Naive thymus-derived CD8-positive, alpha-beta T cell (primary cell): ENCODE measurements at regions of chr4 and their contacts with region 1.

Region 1: DNA sequence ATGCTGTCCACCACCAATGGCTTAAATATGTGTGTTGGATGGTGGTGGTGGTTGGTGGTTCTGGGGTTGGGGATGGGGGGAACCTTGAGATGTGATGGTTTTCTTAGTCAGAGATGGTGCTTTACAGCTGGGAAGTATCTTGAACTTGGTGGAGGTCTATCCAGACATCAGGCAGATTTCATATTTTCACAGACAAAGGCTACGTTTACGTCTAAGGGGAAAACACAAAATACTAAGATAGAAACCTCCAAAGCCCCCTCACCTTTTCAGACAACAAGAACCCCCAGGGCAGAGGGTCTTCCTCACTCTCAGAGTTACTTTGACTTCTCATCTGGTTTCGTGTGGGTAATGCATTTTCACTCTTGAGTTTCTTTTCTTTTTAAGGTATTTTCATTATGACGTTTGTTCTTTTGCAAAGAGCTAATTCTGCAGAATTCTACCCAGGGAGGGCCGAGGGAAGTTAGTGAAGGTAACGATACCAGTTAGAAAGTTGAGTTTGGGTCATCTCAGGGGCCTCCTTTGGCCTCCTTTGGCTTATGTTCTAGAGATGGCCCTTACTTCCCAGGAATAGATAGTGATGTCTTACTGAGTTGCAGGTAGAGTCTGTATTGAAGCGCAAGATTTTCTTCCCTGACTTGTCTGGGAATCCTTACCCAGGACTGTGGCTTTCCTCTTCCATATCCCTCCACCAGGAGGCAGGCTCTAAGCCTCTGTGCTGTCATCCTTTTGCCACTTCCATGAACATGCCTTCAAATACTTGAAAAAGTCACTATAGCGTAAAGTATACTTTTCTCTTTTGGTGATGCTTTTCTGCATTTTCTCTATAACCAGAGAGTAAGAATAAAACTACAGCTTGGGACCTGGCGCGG is 31.9 kb downstream of the RHOH start:
- DNase-seq: no peak
- ATAC-seq: no peak
- H3K4me3 Mint-ChIP-seq: peak overlapping the region; percentile 62 to 91 (median 82)
- H3K27ac Mint-ChIP-seq: peak overlapping the region; percentile 88 to 99 (median 97)
- H3K4me1 Mint-ChIP-seq: peaks cover 47 to 96% (median 90%) of the 10 kb centered on the region in 4 donors
- H3K27me3 Mint-ChIP-seq: no peaks in the 10 kb centered on the region

Region 2: DNA sequence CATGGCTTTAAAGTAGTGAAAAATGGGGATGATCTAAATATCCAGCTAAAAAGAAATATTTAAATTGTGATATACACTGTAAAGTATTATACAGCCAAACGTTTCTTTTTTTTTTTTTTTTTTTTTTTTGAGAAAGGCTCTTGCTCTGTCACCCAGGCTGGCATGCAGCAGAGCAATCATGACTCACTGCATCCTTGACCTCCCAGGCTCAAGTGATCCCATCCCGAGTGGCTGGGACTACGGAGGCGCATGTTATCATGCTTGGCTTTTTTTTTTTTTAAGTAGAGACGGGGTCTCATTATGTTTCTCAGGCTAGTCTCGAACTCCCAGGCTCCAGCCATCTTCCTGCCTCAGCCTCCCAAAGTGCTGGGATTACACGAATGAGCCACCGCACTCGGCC is 607.1 kb before region 1 on chr4:
- POLR2A ChIA-PET with region 1: no interaction called
- DNase-seq: no peak
- ATAC-seq: no peak
- H3K4me3 Mint-ChIP-seq: no peak overlapping the region
- H3K27ac Mint-ChIP-seq: no peak overlapping the region
- H3K4me1 Mint-ChIP-seq: peaks cover 0 to 35% (median 4%) of the 10 kb centered on the region in 4 donors
- H3K27me3 Mint-ChIP-seq: no peaks in the 10 kb centered on the region

Region 3: DNA sequence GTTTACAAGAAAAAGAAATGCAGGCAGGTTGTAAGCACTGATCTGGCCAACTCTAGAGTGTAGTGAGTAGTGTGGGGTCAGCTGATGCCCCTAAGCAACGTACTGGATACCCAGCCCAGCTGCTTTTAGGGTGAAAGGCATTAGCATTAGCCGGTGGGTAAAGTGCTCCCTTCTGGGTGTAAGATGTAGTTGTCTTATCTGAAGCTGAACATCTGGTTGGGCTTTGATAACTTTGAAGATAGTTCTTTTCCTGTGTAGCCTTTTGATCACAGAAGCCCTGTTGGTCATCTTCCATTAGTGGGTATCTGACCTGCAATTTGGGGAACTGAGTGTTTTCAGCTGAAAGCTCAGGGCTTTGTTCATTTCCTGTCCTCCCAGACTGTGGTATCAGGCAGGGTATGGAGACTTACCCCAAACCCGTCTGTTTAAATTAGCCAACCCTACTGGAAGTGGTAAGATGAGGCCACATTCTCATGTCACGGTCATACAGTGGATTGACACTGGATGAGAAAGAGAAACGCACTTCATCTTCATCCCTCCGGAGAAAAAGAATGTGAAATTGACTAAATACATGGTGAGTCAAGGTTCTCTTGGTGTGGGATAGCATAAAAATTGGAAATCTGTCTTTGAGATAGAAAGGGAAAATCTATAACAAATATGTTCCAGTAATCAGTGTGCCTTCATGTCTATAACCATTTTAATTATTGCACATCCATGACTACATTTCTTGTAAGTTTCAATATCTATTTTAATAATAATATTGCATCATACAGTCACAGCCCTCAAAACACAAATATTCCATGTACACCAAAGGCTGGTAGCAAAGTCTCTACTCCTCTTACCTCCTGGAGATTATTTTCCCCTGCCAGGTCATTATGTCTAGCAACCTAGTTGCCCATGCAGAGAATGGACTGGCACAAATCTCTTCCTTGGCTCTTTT is 23.2 kb before region 1 on chr4:
- POLR2A ChIA-PET with region 1: interaction called, 376 read pairs
- DNase-seq: no peak
- ATAC-seq: peak; percentile 29 to 42
- H3K4me3 Mint-ChIP-seq: peak overlapping the region; percentile 94 to 100 (median 98)
- H3K27ac Mint-ChIP-seq: peak overlapping the region; percentile 88 to 100 (median 95)
- H3K4me1 Mint-ChIP-seq: peaks cover 32 to 91% (median 69%) of the 10 kb centered on the region in 4 donors
- H3K27me3 Mint-ChIP-seq: no peaks in the 10 kb centered on the region

Region 4: DNA sequence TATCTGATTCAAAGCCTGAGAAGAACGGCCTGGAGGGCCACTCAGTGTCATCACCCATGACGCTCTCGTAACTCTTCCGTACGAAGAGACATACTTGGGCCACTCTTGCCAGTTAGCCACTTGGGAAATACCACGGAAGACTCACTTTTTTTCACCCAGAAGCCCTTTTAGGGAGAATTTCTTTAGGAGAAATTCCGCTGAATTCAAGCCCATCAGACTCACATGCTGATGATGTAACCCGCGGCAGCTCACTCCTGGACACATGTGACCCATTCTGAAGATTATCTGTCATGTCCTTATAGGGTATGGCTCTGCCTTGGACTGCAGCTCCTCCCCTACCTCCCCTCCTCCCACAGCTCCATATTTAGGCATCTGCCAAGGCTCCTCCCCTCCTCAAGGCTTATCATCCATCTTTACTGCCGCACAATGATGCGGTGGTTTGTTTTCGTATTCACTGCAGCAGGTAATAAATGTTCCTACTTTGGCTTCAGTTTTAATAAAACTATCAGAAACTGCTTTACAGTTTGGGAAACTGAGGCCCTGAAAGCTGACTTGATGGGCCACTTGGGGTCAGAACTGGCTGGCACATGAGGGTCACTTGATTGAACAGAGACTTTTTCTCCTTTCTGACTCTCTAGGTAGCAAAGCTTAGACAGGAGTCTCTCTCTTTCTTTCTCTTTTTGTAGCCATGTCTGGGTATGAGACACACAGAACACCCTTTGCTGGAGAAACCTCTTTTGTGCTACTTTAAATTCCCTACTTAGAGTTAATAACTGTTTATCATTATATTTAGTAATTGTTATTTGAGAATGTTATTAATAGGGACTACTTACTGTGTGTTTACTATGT is 10.2 kb after region 1 on chr4:
- POLR2A ChIA-PET with region 1: interaction called, 45 read pairs
- DNase-seq: peak; percentile 32 to 91 (median 78)
- ATAC-seq: peak; percentile 76 to 92
- H3K4me3 Mint-ChIP-seq: peak overlapping the region; percentile 70 to 89 (median 78)
- H3K27ac Mint-ChIP-seq: peak overlapping the region; percentile 92 to 99 (median 97)
- H3K4me1 Mint-ChIP-seq: peaks cover 43 to 93% (median 91%) of the 10 kb centered on the region in 4 donors
- H3K27me3 Mint-ChIP-seq: no peaks in the 10 kb centered on the region

Region 5: DNA sequence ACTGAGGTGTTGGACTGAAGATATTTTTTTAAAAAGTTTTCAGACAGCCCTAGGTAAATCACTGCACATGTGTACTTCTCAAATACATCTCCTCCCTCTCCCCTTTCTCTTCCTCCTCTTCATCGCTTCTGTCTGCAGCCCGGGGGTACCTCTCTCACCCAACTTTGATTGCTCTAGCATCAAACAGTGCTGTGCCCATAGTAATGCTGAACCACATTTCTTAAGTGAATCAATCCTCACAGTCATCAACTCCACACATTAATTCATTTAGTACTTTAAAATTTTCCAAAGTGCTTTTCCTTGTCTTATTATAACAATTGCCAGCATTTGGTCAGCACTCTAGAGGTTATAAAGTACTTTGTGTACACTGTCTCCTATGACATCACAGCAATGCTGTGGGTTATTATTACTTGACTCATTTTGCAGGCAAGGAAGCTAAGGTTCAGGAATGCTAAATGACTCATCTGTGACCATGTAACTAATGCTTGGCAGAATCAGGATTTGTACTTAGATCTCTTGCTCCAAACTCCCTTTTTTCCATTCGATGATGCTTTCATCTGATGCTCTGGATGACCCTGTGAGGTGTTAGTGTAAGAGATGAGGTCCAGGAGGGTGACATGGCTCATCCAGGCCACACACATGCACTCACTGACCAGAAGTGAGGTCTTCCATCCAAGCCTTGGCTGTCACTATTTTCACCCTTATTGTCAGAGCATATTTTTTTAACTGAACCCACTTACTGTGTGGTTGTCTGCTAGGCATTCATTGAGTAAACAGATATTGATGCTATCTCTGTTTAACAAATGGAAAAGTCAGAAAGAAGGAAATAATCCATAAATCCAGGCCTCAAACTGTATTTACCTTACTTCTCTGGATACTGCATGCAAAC is 26.9 kb after region 1 on chr4:
- POLR2A ChIA-PET with region 1: interaction called, 17 read pairs
- DNase-seq: no peak
- ATAC-seq: peak; percentile 22 to 27
- H3K4me3 Mint-ChIP-seq: peak overlapping the region; percentile 16 to 78 (median 62)
- H3K27ac Mint-ChIP-seq: peak overlapping the region; percentile 84 to 97 (median 94)
- H3K4me1 Mint-ChIP-seq: peaks cover 39 to 77% (median 70%) of the 10 kb centered on the region in 4 donors
- H3K27me3 Mint-ChIP-seq: no peaks in the 10 kb centered on the region

Region 6: GRCh38 chr4:40301603-40302002 is 72.9 kb after region 1 on chr4:
- POLR2A ChIA-PET with region 1: interaction called, 52 read pairs
- DNase-seq: peak; percentile 49 to 93 (median 78)
- ATAC-seq: peak; percentile 83 to 89
- H3K4me3 Mint-ChIP-seq: peak overlapping the region; percentile 31 to 84 (median 74)
- H3K27ac Mint-ChIP-seq: peak overlapping the region; percentile 82 to 100 (median 98)
- H3K4me1 Mint-ChIP-seq: peaks cover 43 to 90% (median 84%) of the 10 kb centered on the region in 4 donors
- H3K27me3 Mint-ChIP-seq: no peaks in the 10 kb centered on the region